CD4-positive, alpha-beta memory T cell (primary cell): ENCODE measurements at regions of chr19 and their contacts with region 1.

Region 1: DNA sequence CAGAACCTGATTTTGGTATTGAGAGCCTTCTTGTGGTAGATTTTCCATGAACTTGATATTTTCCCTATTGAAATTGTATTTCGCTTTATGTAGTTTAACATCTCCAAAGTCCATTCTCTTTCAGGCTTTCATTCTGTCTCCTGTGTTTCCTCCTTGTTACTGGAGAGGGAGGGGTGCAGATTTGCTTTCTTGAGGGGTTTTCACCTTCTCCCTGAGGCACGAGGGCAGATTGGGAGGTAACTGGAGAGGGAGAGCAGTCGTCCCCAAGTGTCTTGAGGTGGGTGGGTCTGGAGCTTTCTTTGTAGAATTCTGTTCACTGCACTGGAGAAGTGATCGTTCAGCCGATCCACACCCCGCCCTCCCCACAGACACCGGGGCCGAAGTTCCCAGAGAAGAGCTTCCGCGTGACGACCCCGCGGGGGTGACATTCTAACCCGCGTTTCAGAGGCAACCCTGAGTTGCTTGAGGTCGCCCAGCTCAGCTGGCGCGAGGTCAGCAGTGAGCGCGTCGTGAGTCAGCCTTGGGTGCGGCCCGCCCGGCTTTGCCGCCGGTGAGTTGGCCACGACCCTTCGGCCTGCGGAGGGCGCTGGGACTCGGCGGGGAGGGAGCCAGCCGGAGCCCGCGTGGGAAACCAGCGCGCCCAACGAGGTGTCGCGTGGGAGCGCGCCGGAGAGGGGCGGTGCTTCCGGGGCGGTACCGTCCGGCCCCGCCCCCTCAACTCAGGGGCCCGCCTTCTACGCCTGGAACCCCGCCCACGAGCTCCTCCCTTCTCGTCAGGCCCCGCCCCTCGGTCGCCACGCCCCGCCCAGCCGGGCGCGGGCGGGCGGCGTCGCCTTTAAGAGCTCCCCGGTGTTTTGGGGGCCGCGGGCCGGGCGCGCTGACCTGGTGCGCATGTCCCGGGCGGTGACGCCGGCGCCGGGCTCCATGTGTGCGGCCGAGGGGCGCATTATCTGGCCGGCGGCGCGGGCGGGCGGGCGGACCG is at the start of gene GATAD2A:
- DNase-seq: peak; percentile 86 to 94 (median 90)
- H3K4me3 ChIP-seq: peak within 1 kb of the TSS; percentile 21 to 78
- H3K4me3 Mint-ChIP-seq: peak within 1 kb of the TSS; percentile 86 to 97 (median 95)
- H3K27ac ChIP-seq: peak within 1 kb of the TSS; percentile 71
- H3K27ac Mint-ChIP-seq: peak within 1 kb of the TSS; percentile 92 to 96 (median 95)
- H3K4me1 ChIP-seq: peaks cover 53% of the 10 kb centered on the region
- H3K4me1 Mint-ChIP-seq: peaks cover 36 to 72% (median 55%) of the 10 kb centered on the region in 4 donors
- H3K27me3 ChIP-seq: no peaks in the 10 kb centered on the region
- H3K27me3 Mint-ChIP-seq: no peaks in the 10 kb centered on the region
- total RNA-seq, gene GATAD2A: 101 to 108 TPM

Region 2: DNA sequence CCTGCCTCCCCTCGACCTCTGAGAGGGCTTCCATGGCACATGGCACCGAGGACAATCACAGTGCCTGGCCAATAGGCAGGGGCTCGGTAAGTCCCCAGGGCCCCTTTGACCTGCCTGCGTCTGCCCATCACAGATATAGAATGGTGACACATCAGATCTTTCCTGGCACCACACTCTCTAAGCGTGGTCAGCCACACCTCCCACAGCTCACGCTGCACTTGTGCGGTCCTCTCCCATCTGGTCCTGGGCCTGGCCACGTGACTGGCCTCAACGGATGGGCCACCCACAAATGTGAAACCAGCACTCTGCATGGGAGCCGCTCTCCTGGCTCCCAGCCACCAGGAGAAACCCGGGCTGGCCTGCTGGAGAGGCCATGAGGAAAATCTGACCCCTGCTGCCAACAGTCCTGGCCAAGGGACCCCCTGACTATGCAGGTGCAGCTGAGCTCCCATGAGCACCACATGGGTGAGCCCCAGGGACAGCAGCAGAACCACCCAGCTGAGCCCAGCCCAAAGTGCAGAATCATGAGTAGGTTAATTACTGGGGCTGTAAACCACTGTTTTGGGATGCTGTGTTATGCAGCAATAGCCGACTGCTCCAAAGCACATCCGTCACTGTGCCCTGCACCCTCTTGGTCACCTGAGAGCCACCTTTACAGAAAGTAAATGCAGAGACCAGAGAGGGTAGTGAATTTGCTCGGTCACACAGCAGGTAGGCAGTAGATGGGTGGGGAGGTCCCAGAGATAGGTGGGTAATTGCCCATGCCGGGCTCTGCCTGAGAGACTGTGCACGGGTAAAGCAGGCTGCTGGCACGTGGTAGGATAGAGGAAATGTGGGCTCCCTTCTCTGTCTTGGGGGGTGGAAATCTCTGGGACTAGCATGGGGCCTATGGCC is 225.4 kb before region 1 on chr19:
- CTCF ChIA-PET with region 1: no interaction called
- POLR2A ChIA-PET with region 1: no interaction called
- intact Hi-C with region 1: no loop called
- DNase-seq: no peak
- H3K4me3 ChIP-seq: no peak overlapping the region
- H3K4me3 Mint-ChIP-seq: no peak overlapping the region
- H3K27ac ChIP-seq: no peak overlapping the region
- H3K27ac Mint-ChIP-seq: peak overlapping the region in 1 of 7 donors; percentile 19
- H3K4me1 ChIP-seq: no peaks in the 10 kb centered on the region
- H3K4me1 Mint-ChIP-seq: peaks cover 0 to 3% (median under 1%) of the 10 kb centered on the region in 4 donors
- H3K27me3 ChIP-seq: no peaks in the 10 kb centered on the region
- H3K27me3 Mint-ChIP-seq: no peaks in the 10 kb centered on the region

Region 3: GRCh38 chr19:19320362-19321142 is 84.6 kb before region 1 on chr19 and contains the starts of genes MAU2 and SUGP1:
- CTCF ChIA-PET with region 1: interaction called, 3 read pairs
- POLR2A ChIA-PET with region 1: no interaction called
- intact Hi-C with region 1: loop called (anchors 1 kb)
- DNase-seq: peak; percentile 92 to 94 (median 94)
- H3K4me3 ChIP-seq: peak within 1 kb of the TSS; percentile 96 to 98
- H3K4me3 Mint-ChIP-seq: peak within 1 kb of the TSS; percentile 93 to 100 (median 99)
- H3K27ac ChIP-seq: peak within 1 kb of the TSS; percentile 97
- H3K27ac Mint-ChIP-seq: peak within 1 kb of the TSS; percentile 94 to 100 (median 100)
- H3K4me1 ChIP-seq: peaks cover 49% of the 10 kb centered on the region
- H3K4me1 Mint-ChIP-seq: peaks cover 22 to 64% (median 40%) of the 10 kb centered on the region in 4 donors
- H3K27me3 ChIP-seq: no peaks in the 10 kb centered on the region
- H3K27me3 Mint-ChIP-seq: no peaks in the 10 kb centered on the region
- total RNA-seq, gene MAU2: 148 to 155 TPM
- total RNA-seq, gene SUGP1: 84.7 to 97.5 TPM

Region 4: DNA sequence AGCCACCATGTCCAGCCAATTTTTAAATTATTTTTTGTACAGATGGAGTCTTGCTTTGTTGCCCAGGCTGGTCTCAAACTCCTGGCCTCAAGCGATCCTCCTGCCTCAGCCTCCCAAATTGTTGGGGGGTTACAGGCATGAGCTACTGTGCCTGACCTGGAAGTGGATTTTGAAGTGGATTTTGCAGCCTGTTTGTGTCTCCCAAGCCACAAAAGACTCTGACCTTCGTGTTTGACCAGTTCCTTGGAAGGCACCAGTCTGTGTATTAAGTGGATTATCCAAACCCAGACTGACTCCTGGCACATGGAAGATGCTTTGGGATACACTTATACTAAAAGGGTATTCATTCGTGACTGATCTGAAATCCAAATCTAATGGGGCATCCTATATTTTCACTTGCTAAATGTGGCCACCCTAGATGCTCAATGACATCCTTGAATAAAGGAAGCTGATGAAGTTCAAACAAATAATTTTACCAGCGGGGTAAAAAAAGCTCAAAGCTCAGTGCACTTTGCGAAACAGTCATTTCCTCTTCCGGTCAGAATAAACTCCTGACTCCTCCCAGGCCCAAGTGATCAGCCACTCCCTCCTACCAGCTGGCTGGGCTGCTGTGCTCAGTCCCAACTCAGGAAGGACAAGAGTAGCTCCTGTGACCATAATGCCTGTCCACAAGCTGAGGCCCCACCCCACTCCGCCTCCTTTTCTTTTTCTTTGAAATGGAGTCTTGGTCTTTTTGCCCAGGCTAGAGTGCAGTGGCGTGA is 32.3 kb before region 1 on chr19:
- CTCF ChIA-PET with region 1: interaction called, 62 read pairs
- POLR2A ChIA-PET with region 1: interaction called, 14 read pairs
- intact Hi-C with region 1: no loop called
- DNase-seq: peak; percentile 40 to 58 (median 52)
- H3K4me3 ChIP-seq: no peak overlapping the region
- H3K4me3 Mint-ChIP-seq: peak overlapping the region in 7 of 8 donors; percentile 50 to 73 (median 54)
- H3K27ac ChIP-seq: peak overlapping the region; percentile 63
- H3K27ac Mint-ChIP-seq: peak overlapping the region; percentile 79 to 95 (median 92)
- H3K4me1 ChIP-seq: peaks cover 18% of the 10 kb centered on the region
- H3K4me1 Mint-ChIP-seq: peaks cover 6 to 14% (median 9%) of the 10 kb centered on the region in 4 donors
- H3K27me3 ChIP-seq: no peaks in the 10 kb centered on the region
- H3K27me3 Mint-ChIP-seq: no peaks in the 10 kb centered on the region

Region 5: GRCh38 chr19:19418555-19419260 is 13.5 kb after region 1 on chr19:
- CTCF ChIA-PET with region 1: interaction called, 11 read pairs
- POLR2A ChIA-PET with region 1: interaction called, 4 read pairs
- intact Hi-C with region 1: no loop called
- DNase-seq: no peak
- H3K4me3 ChIP-seq: no peak overlapping the region
- H3K4me3 Mint-ChIP-seq: peak overlapping the region; percentile 17 to 71 (median 60)
- H3K27ac ChIP-seq: no peak overlapping the region
- H3K27ac Mint-ChIP-seq: peak overlapping the region; percentile 28 to 94 (median 86)
- H3K4me1 ChIP-seq: peaks cover 69% of the 10 kb centered on the region
- H3K4me1 Mint-ChIP-seq: peaks cover 51 to 81% (median 70%) of the 10 kb centered on the region in 4 donors
- H3K27me3 ChIP-seq: no peaks in the 10 kb centered on the region
- H3K27me3 Mint-ChIP-seq: no peaks in the 10 kb centered on the region

Region 6: GRCh38 chr19:19515764-19516519 is 110.8 kb after region 1 on chr19 and contains the start of gene NDUFA13:
- CTCF ChIA-PET with region 1: no interaction called
- POLR2A ChIA-PET with region 1: interaction called, 15 read pairs
- intact Hi-C with region 1: no loop called
- DNase-seq: peak; percentile 91 to 95 (median 92)
- H3K4me3 ChIP-seq: peak within 1 kb of the TSS; percentile 88 to 90
- H3K4me3 Mint-ChIP-seq: peak within 1 kb of the TSS; percentile 93 to 99 (median 97)
- H3K27ac ChIP-seq: peak within 1 kb of the TSS; percentile 92
- H3K27ac Mint-ChIP-seq: peak within 1 kb of the TSS; percentile 94 to 98 (median 97)
- H3K4me1 ChIP-seq: peaks cover 35% of the 10 kb centered on the region
- H3K4me1 Mint-ChIP-seq: peaks cover 16 to 47% (median 29%) of the 10 kb centered on the region in 4 donors
- H3K27me3 ChIP-seq: no peaks in the 10 kb centered on the region
- H3K27me3 Mint-ChIP-seq: no peaks in the 10 kb centered on the region
- total RNA-seq, gene NDUFA13: 191 to 199 TPM